GM12878 (cell line): ENCODE measurements at regions of chr6 and their contacts with region 1.

Region 1: DNA sequence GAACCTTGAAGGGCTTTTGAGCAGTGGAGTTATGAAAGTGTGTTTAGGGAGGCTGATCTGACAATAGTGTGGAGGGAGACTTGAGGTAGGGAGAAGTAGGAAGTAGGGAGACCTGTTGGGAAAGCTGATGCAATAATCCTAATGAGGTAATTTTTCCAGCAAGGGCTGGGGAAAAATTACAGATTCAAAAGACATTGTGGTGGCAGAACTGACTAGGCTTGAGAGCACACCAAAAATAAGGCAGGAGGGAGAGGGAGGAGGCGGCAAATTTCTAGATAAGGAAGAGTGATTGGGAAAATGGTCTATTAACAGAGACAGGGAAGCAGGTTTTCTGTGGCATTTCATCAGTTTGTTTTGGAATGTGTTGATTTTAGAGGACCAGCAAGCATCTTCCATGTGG is 5.5 kb downstream of the PRRT1 start:
- DNase-seq: no peak
- ATAC-seq: no peak
- H3K4me3 ChIP-seq: no peak overlapping the region
- H3K27ac ChIP-seq: no peak overlapping the region
- H3K4me1 ChIP-seq: no peaks in the 10 kb centered on the region
- H3K27me3 ChIP-seq: peaks cover 7 to 12% of the 10 kb centered on the region in 2 experiments
- CTCF ChIP-seq: no peak
- EP300 ChIP-seq: no peak
- POLR2A ChIP-seq: no peak
- RAD21 ChIP-seq: no peak

Region 2: GRCh38 chr6:32092760-32093497 is 53.4 kb before region 1 on chr6:
- CTCF ChIA-PET with region 1: no interaction called
- POLR2A ChIA-PET with region 1: interaction called, 10 read pairs
- RAD21 ChIA-PET with region 1: no interaction called
- SMC1A ChIA-PET with region 1: no interaction called
- in situ Hi-C with region 1: no loop called
- intact Hi-C with region 1: no loop called
- DNase-seq: no peak
- ATAC-seq: no peak
- H3K4me3 ChIP-seq: no peak overlapping the region
- H3K27ac ChIP-seq: no peak overlapping the region
- H3K4me1 ChIP-seq: no peaks in the 10 kb centered on the region
- H3K27me3 ChIP-seq: peaks cover 7 to 10% of the 10 kb centered on the region in 2 experiments
- CTCF ChIP-seq: no peak
- EP300 ChIP-seq: no peak
- POLR2A ChIP-seq: no peak
- RAD21 ChIP-seq: no peak

Region 3: GRCh38 chr6:32198866-32199265 is 52.6 kb after region 1 on chr6:
- CTCF ChIA-PET with region 1: no interaction called
- POLR2A ChIA-PET with region 1: no interaction called
- RAD21 ChIA-PET with region 1: no interaction called
- SMC1A ChIA-PET with region 1: no interaction called
- in situ Hi-C with region 1: no loop called
- intact Hi-C with region 1: no loop called
- DNase-seq: no peak
- ATAC-seq: no peak
- H3K4me3 ChIP-seq: no peak overlapping the region
- H3K27ac ChIP-seq: no peak overlapping the region
- H3K4me1 ChIP-seq: peaks cover 20% of the 10 kb centered on the region
- H3K27me3 ChIP-seq: no peaks in the 10 kb centered on the region
- CTCF ChIP-seq: no peak
- EP300 ChIP-seq: no peak
- POLR2A ChIP-seq: no peak
- RAD21 ChIP-seq: no peak

Region 4: GRCh38 chr6:32255199-32256153 is 109.2 kb after region 1 on chr6:
- CTCF ChIA-PET with region 1: no interaction called
- POLR2A ChIA-PET with region 1: no interaction called
- RAD21 ChIA-PET with region 1: no interaction called
- SMC1A ChIA-PET with region 1: no interaction called
- in situ Hi-C with region 1: no loop called
- intact Hi-C with region 1: no loop called
- DNase-seq: no peak
- ATAC-seq: peak; percentile 93
- H3K4me3 ChIP-seq: no peak overlapping the region
- H3K27ac ChIP-seq: no peak overlapping the region; the same call in 1 of the 2 replicates
- H3K4me1 ChIP-seq: peaks cover 10% of the 10 kb centered on the region
- H3K27me3 ChIP-seq: no peaks in the 10 kb centered on the region
- CTCF ChIP-seq: peak; percentile 42 to 70 (median 50)
- EP300 ChIP-seq: no peak
- POLR2A ChIP-seq: no peak
- RAD21 ChIP-seq: peak; percentile 42; the same call in 1 of the 2 replicates